Activated B cell treated with CpG ODN at 0.5 μM for 24 hours (primary cell): ENCODE measurements at regions of chr17 and their contacts with region 1.

Region 1: GRCh38 chr17:65027305-65027704 is 29.2 kb downstream of the GNA13 start:
- DNase-seq: no peak
- ATAC-seq: peak; percentile 56
- H3K4me3 Mint-ChIP-seq: peak overlapping the region; percentile 38
- H3K27ac Mint-ChIP-seq: peak overlapping the region; percentile 89
- H3K4me1 Mint-ChIP-seq: peaks cover 90% of the 10 kb centered on the region
- H3K27me3 Mint-ChIP-seq: no peaks in the 10 kb centered on the region
- CTCF ChIP-seq: no peak

Region 2: DNA sequence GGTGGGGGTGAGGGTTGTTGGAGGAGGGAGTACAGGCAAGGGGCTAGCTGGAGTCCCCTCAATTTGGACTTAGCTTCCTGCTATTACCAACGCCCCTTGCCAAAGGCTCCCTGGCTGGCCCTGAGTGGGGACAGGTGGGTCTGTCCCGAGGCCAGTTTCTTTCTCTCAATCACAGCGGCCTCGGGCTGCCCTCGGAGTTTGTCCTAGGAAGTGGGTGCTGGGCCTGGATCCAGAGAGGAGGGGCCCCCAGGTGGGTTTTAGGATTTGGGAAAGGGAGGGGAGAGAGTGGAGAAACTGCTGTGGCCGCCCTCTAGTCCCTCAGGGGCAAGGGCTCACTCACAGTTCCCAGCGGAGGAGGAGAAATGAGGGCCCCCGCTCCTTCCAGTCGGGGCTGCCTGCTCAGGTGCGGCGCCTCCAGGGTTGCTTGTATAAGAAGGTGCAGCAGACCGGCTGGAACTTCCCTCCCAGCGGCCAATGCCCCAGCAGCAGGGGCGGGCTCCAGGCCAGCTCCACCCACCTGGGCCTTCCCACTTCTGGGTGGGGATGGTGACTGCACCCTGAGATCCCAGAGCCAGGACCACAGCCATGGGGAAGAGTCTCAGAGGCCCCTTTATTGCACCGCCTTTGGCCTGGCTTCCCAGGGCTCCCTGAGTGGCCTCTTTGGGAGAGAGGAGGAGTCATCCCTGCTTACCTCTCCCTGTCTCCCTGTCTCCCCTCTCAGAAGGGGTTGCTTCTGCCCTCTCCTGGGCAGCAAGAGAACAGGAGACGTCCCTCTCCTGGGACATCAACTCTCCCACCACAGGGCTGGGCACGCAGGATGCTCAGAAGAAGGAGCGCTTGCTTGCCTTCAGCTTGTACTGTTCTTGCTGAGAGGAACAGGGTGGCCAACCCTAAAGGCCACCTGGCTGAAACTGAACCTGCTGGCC is 253.2 kb before region 1 on chr17:
- CTCF ChIA-PET with region 1: no interaction called
- POLR2A ChIA-PET with region 1: no interaction called
- intact Hi-C with region 1: no loop called
- DNase-seq: no peak
- ATAC-seq: no peak
- H3K4me3 Mint-ChIP-seq: no peak overlapping the region
- H3K27ac Mint-ChIP-seq: no peak overlapping the region
- H3K4me1 Mint-ChIP-seq: peaks cover 23% of the 10 kb centered on the region
- H3K27me3 Mint-ChIP-seq: peaks cover 5% of the 10 kb centered on the region
- CTCF ChIP-seq: no peak

Region 3: DNA sequence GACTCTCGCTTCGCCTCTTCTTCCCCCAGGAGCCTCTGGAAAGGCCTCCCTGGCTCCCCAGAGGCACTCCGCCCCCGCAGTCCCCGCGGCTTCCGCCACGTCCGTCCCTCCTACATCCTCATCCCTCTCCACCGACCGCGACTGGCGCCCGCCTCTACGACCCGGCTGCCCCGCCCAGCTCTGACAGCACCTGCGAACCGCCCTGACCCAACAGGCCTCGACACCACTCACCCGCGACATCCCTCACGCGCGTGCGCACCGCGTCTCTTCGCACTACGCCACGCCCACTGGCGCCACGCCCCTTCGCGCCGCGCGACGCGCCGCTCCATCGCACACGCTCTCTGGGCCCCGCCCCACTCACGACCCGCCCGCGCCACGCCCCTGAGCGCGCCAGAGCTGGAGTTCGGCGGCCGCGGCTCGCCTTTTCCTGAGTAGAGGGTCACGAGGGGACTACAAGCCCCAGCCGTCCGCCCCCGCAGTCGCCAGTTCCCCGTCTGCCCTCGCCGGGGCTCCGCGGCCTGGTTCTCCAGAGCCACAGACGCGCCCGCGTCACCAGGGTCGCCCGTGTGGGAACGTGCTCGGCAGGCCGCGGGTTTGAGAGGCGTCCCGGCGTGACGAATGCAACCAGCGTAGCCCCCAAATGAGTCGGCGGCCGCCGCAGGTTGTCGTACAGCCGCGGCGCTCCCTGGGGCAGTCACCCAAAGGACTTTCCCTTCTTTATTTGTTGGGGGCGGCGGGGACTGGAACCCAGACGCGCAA is 51.8 kb before region 1 on chr17:
- CTCF ChIA-PET with region 1: interaction called, 3 read pairs
- POLR2A ChIA-PET with region 1: interaction called, 24 read pairs
- intact Hi-C with region 1: loop called (anchors 1 kb)
- DNase-seq: peak; percentile 98
- ATAC-seq: peak; percentile 76
- H3K4me3 Mint-ChIP-seq: peak overlapping the region; percentile 92
- H3K27ac Mint-ChIP-seq: peak overlapping the region; percentile 99
- H3K4me1 Mint-ChIP-seq: peaks cover 57% of the 10 kb centered on the region
- H3K27me3 Mint-ChIP-seq: no peaks in the 10 kb centered on the region
- CTCF ChIP-seq: no peak

Region 4: DNA sequence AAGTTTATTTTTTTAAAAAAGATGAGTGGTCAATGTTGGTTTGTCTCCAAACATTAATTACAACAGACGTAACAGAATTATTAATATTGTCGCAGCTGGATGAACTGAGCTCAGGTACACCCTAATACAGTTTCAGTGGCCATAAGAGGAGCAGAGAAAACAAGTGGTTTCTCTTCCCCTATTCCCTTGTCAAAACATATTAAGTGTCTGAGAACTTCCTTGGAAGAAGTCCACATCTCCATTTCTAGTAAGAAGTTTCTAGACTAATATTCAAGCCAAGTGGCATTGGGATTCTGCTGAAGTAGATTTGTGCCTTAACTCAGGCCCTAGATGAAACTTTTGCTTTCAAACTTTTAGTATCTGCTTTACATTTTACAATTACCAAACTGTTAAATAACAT is 18.4 kb before region 1 on chr17:
- CTCF ChIA-PET with region 1: no interaction called
- POLR2A ChIA-PET with region 1: interaction called, 4 read pairs
- intact Hi-C with region 1: loop called (anchors 2 kb)
- DNase-seq: no peak
- ATAC-seq: no peak
- H3K4me3 Mint-ChIP-seq: no peak overlapping the region
- H3K27ac Mint-ChIP-seq: peak overlapping the region; percentile 3
- H3K4me1 Mint-ChIP-seq: peaks cover 81% of the 10 kb centered on the region
- H3K27me3 Mint-ChIP-seq: no peaks in the 10 kb centered on the region
- CTCF ChIP-seq: no peak

Region 5: GRCh38 chr17:65047942-65048341 is 20.6 kb after region 1 on chr17:
- CTCF ChIA-PET with region 1: no interaction called
- POLR2A ChIA-PET with region 1: interaction called, 4 read pairs
- intact Hi-C with region 1: loop called (anchors 2 kb)
- DNase-seq: no peak
- ATAC-seq: peak; percentile 34
- H3K4me3 Mint-ChIP-seq: no peak overlapping the region
- H3K27ac Mint-ChIP-seq: peak overlapping the region; percentile 60
- H3K4me1 Mint-ChIP-seq: peaks cover 86% of the 10 kb centered on the region
- H3K27me3 Mint-ChIP-seq: no peaks in the 10 kb centered on the region
- CTCF ChIP-seq: no peak

Region 6: GRCh38 chr17:65100316-65101140 is 73.2 kb after region 1 on chr17:
- CTCF ChIA-PET with region 1: interaction called, 3 read pairs
- POLR2A ChIA-PET with region 1: interaction called, 3 read pairs
- intact Hi-C with region 1: loop called (anchors 1 kb)
- DNase-seq: peak; percentile 82
- ATAC-seq: peak; percentile 84
- H3K4me3 Mint-ChIP-seq: peak overlapping the region; percentile 85
- H3K27ac Mint-ChIP-seq: peak overlapping the region; percentile 98
- H3K4me1 Mint-ChIP-seq: peaks cover 23% of the 10 kb centered on the region
- H3K27me3 Mint-ChIP-seq: peaks cover 5% of the 10 kb centered on the region
- CTCF ChIP-seq: no peak

Region 7: GRCh38 chr17:65137021-65137991 is 110.0 kb after region 1 on chr17 and contains the start of gene RGS9:
- CTCF ChIA-PET with region 1: no interaction called
- POLR2A ChIA-PET with region 1: interaction called, 11 read pairs
- intact Hi-C with region 1: loop called (anchors 2 kb)
- DNase-seq: peak; percentile 84
- ATAC-seq: peak; percentile 91
- H3K4me3 Mint-ChIP-seq: peak within 1 kb of the TSS; percentile 81
- H3K27ac Mint-ChIP-seq: peak within 1 kb of the TSS; percentile 65
- H3K4me1 Mint-ChIP-seq: peaks cover 20% of the 10 kb centered on the region
- H3K27me3 Mint-ChIP-seq: peaks cover 9% of the 10 kb centered on the region
- CTCF ChIP-seq: no peak
- total RNA-seq, gene RGS9: 3.2 TPM in 2 replicates